Cardiac septum (tissue), 1 donor: ENCODE measurements at regions of chr7 and their contacts with region 1.

Region 1: DNA sequence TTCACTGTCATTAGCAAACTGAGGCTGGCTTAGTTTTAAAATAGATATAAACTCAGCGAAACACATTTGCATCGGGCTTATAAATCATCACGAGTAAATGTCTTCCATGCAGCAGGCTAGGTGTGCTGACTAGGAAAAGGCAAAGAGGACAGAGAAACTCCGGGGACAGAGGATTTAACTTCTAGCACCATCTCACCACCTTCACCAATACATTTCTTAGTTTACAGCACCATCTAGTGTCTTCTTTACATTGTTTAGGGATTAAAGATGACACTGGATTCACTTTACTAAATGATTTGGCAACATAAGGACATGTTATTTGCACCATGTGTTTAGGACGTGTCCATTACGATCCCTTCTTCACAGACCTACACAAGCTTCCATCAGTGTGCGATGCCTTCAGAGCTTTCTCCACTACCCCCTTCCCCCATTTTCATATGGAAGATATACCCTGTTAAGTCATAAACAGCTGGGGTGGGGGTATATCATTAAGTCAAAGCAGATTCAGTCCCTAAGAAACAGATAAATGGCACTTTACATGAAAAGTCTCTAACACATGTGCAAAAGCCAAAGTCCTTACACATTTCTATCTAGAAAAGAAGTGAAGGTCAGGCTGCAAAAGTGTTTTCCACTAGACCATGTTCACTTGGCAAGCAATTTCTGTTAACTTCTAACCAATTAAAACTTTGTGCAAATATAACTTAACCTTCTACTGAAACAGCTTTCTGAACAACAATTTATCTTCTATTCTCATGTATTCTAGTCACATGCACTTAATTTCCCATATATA is 103.3 kb downstream of the GRB10 start:
- DNase-seq: no peak

Region 2: DNA sequence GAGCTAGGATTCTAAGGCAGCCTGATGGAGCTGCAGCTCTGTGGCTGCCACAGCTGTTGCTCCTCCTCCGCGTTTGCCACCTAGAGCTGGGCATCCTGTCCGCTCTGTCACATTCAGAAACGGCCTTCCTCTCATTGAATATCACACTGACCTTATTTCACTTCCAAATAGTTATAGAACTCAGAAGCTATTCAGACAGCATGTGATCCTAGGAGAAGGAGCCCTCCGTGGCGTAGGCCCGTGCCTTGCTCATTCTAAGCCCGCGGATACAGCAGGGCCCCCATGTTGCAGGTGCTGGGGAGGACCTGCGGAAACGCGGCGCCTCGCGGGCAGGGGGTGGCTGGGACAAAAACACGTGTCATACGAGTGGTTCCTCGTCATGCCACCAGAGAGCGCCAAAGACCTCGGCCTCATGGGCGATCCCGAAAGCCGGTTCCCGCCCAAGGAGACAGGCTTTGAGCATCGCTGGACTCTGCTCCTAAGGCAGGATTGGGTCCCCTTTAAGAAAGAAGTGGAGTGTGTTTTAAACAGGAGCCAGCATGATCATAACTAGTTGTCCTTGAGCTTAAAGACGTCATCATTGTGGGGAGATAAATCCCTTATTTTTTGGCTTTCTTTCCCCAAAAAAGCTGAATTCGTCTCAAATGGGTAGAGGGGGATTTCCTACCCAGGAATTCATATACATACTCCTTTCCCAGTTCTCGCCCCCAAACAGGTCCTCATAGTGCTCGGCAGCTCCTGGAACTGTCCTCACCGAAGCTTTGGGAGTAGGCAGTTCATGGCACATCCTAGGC is 211.4 kb before region 1 on chr7:
- intact Hi-C with region 1: loop called (anchors 5 kb)
- DNase-seq: peak; percentile 91

Region 3: DNA sequence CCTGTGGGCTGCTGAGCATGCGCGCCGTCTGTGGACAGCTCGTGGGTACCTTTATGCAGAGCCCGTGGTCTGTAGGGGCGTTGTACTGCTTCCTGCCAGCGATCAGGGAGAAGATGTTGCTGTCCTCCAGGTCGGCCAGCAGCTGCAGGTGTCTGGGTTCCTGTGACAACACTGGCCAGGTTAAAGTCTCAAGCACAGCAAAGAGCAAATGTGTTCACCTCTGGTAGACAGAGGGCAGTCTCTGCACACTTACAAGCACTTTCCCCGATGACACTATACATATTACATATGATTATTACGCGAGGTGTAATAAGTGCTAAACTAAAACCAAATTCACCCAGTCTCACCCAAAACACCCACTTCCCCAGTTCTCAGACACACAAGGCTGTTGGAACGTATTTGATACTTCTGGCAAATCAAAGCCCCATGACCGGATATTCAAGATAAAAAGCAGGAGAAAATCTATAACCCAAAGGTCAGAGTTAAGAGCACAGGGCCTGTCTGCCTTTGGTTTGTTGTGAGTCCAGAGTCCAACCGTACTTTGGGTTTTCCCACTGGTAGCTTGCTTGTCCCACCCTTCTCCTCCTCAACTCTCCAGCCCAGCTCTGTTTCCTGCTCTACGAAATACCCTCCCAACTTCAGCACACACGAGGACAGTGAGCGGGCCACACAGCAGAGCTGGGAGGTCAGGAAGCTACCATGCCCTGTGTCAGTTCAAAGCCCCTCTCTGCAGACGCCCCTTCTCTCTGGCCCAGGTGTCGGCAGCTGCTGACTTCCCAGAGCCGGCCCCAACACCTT is 64.5 kb before region 1 on chr7:
- intact Hi-C with region 1: loop called (anchors 5 kb)
- DNase-seq: no peak